ENCODE measurements at regions of chr1 and their contacts with region 1.

Region 1: DNA sequence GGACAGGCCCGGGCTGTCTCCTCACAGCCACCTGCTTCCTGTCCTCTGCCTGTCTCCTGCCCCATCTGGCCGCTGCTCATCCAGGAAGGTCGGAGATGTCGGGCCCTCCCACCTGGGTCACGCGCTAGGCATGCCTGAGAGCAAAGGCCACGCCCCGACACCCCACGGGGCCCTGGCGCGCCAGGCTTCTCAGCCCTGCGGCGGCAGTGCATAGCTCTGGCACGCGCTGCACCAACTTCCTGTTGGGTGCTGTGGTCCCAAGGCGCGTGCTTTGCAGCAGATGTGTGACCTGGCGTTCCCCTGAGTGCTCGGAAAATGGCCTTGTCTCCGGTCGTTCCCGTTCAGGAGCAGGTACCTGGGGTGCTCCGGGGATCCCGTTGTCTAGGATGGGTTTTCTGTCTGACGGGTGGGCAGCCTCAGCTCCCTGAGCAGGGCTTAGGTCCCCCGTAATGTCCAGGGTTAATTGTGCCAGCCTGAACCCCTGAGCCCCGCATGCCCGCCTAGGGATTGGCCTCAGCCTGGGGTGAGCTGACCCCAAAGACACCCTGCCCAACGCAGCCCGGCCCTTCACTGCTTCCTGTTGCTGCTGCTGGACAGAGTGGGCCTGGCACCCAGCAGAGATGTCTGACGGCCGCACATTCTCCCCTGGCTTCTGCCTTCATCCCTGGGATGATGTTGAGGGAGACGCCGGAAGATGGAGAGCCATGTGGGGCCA is 19.4 kb upstream of the KCNAB2 start:
- DNase-seq: peak; percentile 98
- ATAC-seq: peak; percentile 75
- H3K4me3 Mint-ChIP-seq: peak overlapping the region; percentile 97
- H3K27ac Mint-ChIP-seq: peak overlapping the region; percentile 98
- H3K4me1 Mint-ChIP-seq: peaks cover 45% of the 10 kb centered on the region
- H3K27me3 Mint-ChIP-seq: no peaks in the 10 kb centered on the region
- CTCF ChIP-seq: no peak

Region 2: DNA sequence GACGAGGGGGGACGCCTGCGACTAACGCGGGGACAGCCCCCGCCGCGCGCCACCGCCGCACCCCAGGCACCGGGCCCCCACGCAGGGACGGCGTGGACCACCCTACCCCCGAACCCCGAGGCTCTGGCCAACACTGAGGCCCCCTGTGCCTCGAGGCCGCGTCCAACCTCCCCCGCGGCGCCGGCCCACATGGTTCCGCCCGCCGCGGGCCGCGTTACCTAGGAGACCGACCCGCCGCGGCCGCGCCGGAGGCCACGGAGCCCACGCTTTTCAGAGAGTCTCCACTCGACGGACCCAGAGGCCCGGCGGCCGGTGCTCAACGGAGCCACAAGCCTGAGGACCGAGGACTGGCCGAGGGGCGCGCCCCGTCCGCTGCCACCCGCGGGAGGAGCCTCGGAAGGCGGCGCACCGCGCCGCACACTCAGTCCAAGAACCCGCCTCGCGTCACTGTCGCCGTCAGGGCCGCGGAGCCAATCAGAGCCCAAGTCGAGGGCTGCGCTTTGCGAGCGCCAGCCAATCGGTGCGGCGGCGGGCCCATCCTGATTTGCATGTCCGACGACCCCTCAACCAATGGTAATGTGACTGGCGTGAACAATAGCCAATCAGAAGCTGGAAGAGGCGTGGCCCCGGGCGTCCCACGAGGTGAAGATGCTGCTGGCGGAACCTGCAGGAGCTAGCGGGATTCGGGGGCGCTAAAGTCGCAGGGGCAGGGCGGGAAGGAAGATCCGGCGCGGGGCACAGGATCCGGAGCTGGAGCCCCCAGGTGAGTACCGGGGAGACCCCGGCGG is 34.0 kb before region 1 on chr1 and contains the start of gene NPHP4:
- CTCF ChIA-PET with region 1: interaction called, 5 read pairs
- POLR2A ChIA-PET with region 1: interaction called, 55 read pairs
- intact Hi-C with region 1: loop called (anchors 5 kb)
- DNase-seq: peak; percentile 100
- ATAC-seq: peak; percentile 90
- H3K4me3 Mint-ChIP-seq: peak within 1 kb of the TSS; percentile 96
- H3K27ac Mint-ChIP-seq: peak within 1 kb of the TSS; percentile 94
- H3K4me1 Mint-ChIP-seq: peaks cover 21% of the 10 kb centered on the region
- H3K27me3 Mint-ChIP-seq: no peaks in the 10 kb centered on the region
- CTCF ChIP-seq: no peak
- total RNA-seq, gene NPHP4: 16.5 to 16.8 TPM

Region 3: DNA sequence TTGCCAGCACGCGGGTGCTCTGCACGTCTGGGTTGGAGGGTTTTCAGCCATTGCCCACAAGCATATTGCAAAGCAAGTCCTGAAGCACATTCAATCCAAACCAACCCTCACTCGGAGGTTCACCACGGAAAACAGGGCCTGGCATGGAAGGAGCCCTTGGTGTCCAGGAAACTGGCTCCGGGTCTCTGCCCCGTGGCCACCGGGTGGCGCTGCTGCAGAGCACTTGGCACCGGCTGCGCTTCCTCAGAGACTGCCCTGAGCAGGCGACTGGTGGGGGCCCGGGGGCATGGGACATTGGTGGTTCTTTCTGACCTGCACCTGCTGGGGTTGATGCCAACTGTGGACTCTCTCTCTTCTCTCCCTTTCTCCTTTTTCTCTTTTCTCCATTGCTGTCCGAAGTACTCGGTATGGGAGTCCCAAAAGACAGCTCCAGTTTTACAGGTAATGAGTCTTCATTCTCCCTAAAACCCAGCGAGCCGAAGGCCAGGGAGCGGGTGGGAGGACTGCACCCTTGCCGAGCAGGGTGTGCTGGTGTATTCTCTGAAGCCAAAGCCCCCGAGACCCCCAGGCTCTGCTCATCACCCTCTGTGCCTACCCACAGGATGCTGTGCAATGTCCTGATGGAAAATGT is 15.3 kb after region 1 on chr1:
- CTCF ChIA-PET with region 1: interaction called, 3 read pairs
- POLR2A ChIA-PET with region 1: interaction called, 24 read pairs
- intact Hi-C with region 1: no loop called
- DNase-seq: peak; percentile 39
- ATAC-seq: no peak
- H3K4me3 Mint-ChIP-seq: no peak overlapping the region
- H3K27ac Mint-ChIP-seq: no peak overlapping the region
- H3K4me1 Mint-ChIP-seq: peaks cover 29% of the 10 kb centered on the region
- H3K27me3 Mint-ChIP-seq: no peaks in the 10 kb centered on the region
- CTCF ChIP-seq: peak; percentile 56